GM10248 (cell line): ENCODE measurements at regions of chr14 and their contacts with region 1.

Region 1: GRCh38 chr14:34322940-34323418 is 139.1 kb downstream of the SPTSSA start:
- DNase-seq: peak; percentile 79
- CTCF ChIP-seq: peak; percentile 77

Region 2: DNA sequence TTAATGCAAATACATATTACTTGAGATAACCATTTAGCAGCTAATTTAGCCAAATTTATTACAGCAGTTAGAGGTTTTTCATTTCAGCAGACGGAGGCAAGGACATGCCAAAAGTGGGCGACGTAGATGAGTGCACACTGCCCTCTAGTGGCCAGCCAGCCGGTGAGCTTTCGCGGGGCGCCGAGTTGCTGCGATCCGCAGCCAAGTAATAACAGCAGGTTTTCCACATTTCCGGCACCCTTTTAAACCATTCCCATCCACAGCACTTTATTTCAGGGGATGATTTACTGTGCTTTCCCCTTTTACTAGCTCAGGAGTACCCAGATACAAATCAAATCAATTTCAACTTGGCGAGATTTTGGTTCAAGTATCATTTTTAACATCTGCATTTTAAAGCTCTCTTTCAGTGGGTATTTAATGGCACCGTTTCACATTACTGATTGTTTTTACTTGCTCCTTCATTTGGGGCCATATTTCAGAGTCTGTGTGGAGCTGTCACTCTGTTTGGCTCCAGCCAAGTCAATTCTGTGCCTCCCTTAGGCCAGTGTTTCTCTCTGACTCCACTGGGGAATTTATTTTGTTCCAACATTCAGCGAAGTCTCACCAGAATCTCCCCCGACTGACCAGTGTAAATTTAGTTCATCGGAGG is 530.1 kb before region 1 on chr14:
- CTCF ChIA-PET with region 1: no interaction called
- POLR2A ChIA-PET with region 1: no interaction called
- DNase-seq: peak; percentile 73
- CTCF ChIP-seq: peak; percentile 96

Region 3: GRCh38 chr14:33839193-33840076 is 483.5 kb before region 1 on chr14:
- CTCF ChIA-PET with region 1: interaction called, 14 read pairs
- POLR2A ChIA-PET with region 1: no interaction called
- DNase-seq: peak; percentile 60
- CTCF ChIP-seq: peak; percentile 63

Region 4: GRCh38 chr14:34211732-34212131 is 111.2 kb before region 1 on chr14:
- CTCF ChIA-PET with region 1: no interaction called
- POLR2A ChIA-PET with region 1: no interaction called
- DNase-seq: no peak
- CTCF ChIP-seq: no peak

Region 5: DNA sequence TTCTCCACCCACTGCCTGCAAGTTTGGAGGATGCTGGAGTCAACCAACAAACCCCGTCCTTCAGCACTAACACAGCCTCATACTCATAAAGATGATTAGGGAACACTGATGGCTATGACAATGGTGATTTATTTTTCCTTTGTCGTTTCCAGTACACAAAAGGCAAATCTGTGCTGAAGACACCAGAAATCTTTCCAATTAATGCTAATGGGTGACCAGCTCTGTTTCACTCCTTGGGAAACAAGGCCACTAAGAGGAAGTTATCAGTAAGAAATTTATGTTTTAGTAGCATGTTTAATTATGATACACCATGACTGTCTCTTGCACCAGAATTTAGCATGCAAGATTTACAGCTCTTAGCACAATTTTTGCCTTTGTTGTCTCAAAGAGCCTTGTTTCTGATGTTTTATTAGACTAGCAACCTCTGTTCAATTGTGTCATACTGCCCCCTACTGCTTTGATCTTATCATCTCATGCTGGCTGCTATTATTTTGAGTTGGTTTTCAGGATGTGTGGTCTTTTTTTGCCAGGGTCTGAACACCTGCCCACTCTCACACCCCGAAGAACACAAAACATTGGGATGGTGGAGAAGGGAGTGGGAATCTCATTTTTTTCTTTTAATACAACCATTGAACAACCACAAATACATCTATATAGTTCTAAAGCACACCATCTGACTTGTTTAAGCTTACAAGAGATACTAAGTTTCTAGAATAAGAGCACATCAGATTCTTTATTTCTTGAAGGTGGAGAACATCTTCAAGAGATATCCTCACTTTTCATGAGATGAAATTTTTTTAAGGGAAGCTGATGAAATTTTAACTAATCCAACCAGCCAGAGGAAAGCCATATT is 21.9 kb before region 1 on chr14:
- CTCF ChIA-PET with region 1: interaction called, 71 read pairs
- POLR2A ChIA-PET with region 1: no interaction called
- DNase-seq: peak; percentile 48
- CTCF ChIP-seq: peak; percentile 59

Region 6: DNA sequence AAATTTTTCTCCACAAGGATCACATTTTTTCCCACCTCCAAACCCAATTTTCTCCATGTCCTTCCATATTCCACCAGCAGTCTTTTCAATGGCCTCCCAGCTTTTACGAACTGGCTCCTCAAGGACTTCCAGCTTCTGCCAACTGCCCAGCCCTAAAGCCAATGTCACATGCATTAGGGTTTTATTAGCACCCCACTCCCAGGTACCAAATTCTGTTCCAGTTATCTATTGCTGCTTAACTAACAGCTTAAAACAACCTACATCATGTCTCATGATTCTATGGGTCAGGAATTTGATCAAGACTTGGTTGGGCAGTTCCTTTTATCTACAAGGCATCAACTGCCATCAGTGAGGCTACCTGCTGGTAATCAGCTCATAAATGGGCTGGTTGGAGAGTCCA is 12.3 kb before region 1 on chr14:
- CTCF ChIA-PET with region 1: interaction called, 71 read pairs
- POLR2A ChIA-PET with region 1: no interaction called
- DNase-seq: no peak
- CTCF ChIP-seq: no peak